Activated CD4-positive, alpha-beta memory T cell treated with anti-CD3 and anti-CD28 coated beads for 36 hours (primary cell): ENCODE measurements at regions of chr16 and their contacts with region 1.

Region 1: DNA sequence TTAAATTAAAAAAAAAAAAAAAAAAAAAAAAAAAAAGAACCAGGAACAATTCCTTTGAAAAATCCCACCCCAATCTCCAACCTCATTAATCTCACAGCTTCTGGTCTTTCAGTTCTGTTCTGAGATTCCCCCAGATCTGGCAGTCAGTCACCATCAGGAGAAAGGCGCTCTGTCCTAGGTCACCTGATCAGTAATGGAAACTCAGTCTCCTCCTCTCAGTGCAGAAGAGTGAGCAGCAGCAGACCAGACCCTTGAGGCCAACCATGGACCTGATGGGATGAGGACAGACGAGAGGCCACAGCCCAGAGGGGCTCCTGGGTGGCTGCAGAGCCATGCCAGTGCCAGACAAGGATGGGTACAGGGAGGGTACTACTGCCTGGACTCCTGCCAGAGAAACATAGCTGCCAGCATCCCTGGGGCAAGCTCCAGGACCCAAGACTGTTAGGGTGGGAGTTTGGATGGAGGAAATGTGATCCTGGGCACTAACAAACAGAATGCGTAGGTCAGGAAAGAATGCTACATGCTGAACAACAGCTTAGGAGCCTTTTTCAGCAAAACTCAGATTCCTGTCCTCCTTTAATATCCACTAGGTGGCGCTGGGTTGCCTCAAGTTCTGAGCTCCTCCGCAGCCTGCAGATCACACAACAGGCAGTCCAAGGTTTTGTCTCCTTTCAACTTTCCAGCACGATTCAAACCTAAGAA is 28.7 kb downstream of the MPG start:
- DNase-seq: peak; percentile 62
- H3K4me3 Mint-ChIP-seq: no peak overlapping the region
- H3K27ac Mint-ChIP-seq: no peak overlapping the region
- H3K4me1 Mint-ChIP-seq: no peaks in the 10 kb centered on the region
- H3K27me3 Mint-ChIP-seq: no peaks in the 10 kb centered on the region

Region 2: DNA sequence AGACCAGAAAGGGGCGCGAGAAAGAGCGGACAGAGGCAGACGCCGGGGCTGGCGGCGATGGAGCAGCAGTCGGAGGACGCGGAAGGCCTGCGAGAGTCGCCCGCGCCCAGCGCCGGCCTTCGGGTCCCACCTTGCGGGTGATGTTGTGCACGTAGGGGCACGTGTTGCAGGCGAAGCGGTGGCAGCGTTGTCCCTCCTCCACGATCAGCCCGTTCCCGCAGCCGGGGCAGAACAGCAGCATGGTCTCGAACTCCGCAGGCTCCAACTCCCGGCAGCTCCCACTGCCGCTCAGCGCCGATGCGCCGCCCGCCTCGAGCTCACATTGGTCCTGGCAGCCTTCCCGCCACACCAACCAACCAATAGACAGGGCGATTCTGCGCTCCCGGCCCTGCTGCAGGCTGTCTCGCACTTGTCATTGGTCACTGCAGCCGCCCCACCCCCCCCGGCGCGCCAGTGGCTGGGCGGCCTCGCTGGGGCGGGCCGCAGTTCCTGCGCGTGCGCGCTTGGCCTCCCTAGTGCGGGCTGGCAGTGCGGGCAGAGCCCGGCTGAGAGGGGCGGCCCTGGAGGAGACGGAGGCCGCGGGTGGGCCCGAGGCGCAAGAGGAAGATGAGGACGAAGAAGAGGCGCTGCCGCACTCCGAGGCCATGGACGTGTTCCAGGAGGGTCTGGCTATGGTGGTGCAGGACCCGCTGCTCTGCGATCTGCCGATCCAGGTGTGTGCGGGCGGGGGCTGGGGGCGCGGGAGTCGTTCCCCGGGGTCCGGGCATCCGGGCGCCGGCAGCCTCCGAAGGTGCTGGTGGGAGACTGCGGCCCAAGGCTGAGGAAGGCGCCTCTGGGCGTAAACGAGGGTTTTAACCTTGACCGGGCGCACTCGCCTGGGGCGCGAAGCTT is 53.2 kb before region 1 on chr16 and contains the starts of genes POLR3K and SNRNP25:
- CTCF ChIA-PET with region 1: interaction called, 10 read pairs
- POLR2A ChIA-PET with region 1: no interaction called
- intact Hi-C with region 1: no loop called
- DNase-seq: peak; percentile 99
- H3K4me3 Mint-ChIP-seq: peak within 1 kb of the TSS; percentile 87
- H3K27ac Mint-ChIP-seq: peak within 1 kb of the TSS; percentile 90
- H3K4me1 Mint-ChIP-seq: peaks cover 27% of the 10 kb centered on the region
- H3K27me3 Mint-ChIP-seq: no peaks in the 10 kb centered on the region
- total RNA-seq, gene POLR3K: 39.9 to 45.3 TPM
- total RNA-seq, gene SNRNP25: 48.5 to 51.1 TPM

Region 3: GRCh38 chr16:91484-91883 is 15.3 kb before region 1 on chr16:
- CTCF ChIA-PET with region 1: interaction called, 66 read pairs
- POLR2A ChIA-PET with region 1: interaction called, 3 read pairs
- intact Hi-C with region 1: no loop called
- DNase-seq: no peak
- H3K4me3 Mint-ChIP-seq: no peak overlapping the region
- H3K27ac Mint-ChIP-seq: no peak overlapping the region
- H3K4me1 Mint-ChIP-seq: no peaks in the 10 kb centered on the region
- H3K27me3 Mint-ChIP-seq: no peaks in the 10 kb centered on the region

Region 4: GRCh38 chr16:117379-118365 is 10.9 kb after region 1 on chr16:
- CTCF ChIA-PET with region 1: interaction called, 49 read pairs
- POLR2A ChIA-PET with region 1: interaction called, 3 read pairs
- intact Hi-C with region 1: no loop called
- DNase-seq: peak; percentile 63
- H3K4me3 Mint-ChIP-seq: no peak overlapping the region
- H3K27ac Mint-ChIP-seq: no peak overlapping the region
- H3K4me1 Mint-ChIP-seq: peaks cover 9% of the 10 kb centered on the region
- H3K27me3 Mint-ChIP-seq: no peaks in the 10 kb centered on the region

Region 5: GRCh38 chr16:180938-181667 is 74.3 kb after region 1 on chr16:
- CTCF ChIA-PET with region 1: interaction called, 18 read pairs
- POLR2A ChIA-PET with region 1: no interaction called
- intact Hi-C with region 1: loop called (anchors 2 kb)
- DNase-seq: peak; percentile 89
- H3K4me3 Mint-ChIP-seq: peak overlapping the region; percentile 20
- H3K27ac Mint-ChIP-seq: no peak overlapping the region
- H3K4me1 Mint-ChIP-seq: no peaks in the 10 kb centered on the region
- H3K27me3 Mint-ChIP-seq: peaks cover 22% of the 10 kb centered on the region